HCT116 (cell line): ENCODE measurements at regions of chr13 and their contacts with region 1.

Region 1: GRCh38 chr13:51902776-51903175 is 41.0 kb downstream of the CCDC70 start:
- DNase-seq: no peak
- ATAC-seq: no peak
- H3K4me3 ChIP-seq: no peak overlapping the region
- H3K27ac ChIP-seq: no peak overlapping the region
- H3K4me1 ChIP-seq: no peaks in the 10 kb centered on the region
- H3K27me3 ChIP-seq: 0 out of 2 replicates have a peak, but pooled peaks cover 2% of the 10 kb centered on the region
- CTCF ChIP-seq: no peak
- POLR2A ChIP-seq: no peak
- RAD21 ChIP-seq: no peak

Region 2: GRCh38 chr13:51945149-51945548 is 42.4 kb after region 1 on chr13:
- CTCF ChIA-PET with region 1: no interaction called
- POLR2A ChIA-PET with region 1: no interaction called
- RAD21 ChIA-PET with region 1: no interaction called
- intact Hi-C with region 1: loop called (anchors 1 kb)
- DNase-seq: no peak
- ATAC-seq: no peak
- H3K4me3 ChIP-seq: no peak overlapping the region
- H3K27ac ChIP-seq: no peak overlapping the region
- H3K4me1 ChIP-seq: peaks cover 12 to 14% of the 10 kb centered on the region in 2 experiments; a peak in 3 of 4 replicates
- H3K27me3 ChIP-seq: no peaks in the 10 kb centered on the region; the same call in 1 of the 2 replicates
- CTCF ChIP-seq: no peak
- POLR2A ChIP-seq: no peak
- RAD21 ChIP-seq: no peak

Region 3: GRCh38 chr13:52169839-52170238 is 267.1 kb after region 1 on chr13:
- CTCF ChIA-PET with region 1: no interaction called
- POLR2A ChIA-PET with region 1: no interaction called
- RAD21 ChIA-PET with region 1: no interaction called
- intact Hi-C with region 1: no loop called
- DNase-seq: no peak
- ATAC-seq: no peak
- H3K4me3 ChIP-seq: no peak overlapping the region
- H3K27ac ChIP-seq: no peak overlapping the region
- H3K4me1 ChIP-seq: no peaks in the 10 kb centered on the region
- H3K27me3 ChIP-seq: no peaks in the 10 kb centered on the region
- CTCF ChIP-seq: no peak
- POLR2A ChIP-seq: no peak
- RAD21 ChIP-seq: no peak